Colonic mucosa (tissue), 4 donors: ENCODE measurements at regions of chr7 and their contacts with region 1.

Region 1: DNA sequence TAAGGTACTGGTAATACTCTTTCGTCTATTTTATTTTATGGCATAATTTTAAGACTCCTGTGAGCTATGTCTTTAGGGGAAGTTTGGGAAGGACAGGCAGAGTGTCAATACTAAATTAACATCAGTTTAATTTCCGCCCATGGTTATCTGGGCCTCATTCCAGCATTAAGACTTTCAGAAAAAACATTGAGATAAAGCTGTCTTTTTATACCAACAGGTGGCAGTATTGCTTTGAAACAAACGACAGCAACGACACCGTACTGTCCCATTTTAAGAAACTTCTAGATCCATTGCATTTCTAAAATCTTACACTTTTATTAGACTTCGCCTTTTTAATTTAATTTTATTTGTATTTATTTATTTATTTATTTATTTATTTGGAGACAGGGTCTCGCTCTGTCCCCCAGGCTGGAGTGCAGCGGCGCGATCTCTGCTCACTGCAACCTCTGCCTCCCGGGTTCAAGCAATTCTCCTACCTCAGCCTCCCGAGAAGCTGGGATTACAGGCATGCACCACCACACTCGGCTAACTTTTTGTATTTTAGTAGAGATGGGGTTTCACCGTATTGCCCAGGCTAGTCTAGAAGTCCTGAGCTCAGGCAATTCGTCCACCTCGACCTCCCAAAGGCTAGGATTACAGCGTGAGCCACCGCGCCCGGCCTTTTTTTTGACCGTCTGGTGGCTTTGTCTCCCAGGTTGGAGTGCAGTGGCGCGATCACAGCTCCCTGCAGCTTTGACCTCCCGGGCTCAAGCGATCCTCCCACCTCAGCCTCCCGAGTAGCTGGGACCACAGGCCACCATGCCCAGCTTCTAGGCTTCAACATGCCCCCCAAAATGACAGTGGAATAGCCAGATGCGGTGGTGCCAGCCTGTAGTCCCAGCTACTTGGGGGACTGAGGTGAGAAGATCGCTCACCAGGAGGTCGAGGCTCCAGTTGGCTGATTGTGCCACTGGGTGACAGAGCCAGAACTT is 78.7 kb upstream of the C1GALT1 start:
- DNase-seq: no peak
- H3K4me3 ChIP-seq: no peak overlapping the region
- H3K27ac ChIP-seq: no peak overlapping the region
- H3K4me1 ChIP-seq: no peaks in the 10 kb centered on the region
- H3K27me3 ChIP-seq: no peaks in the 10 kb centered on the region
- CTCF ChIP-seq: peak; percentile 62

Region 2: DNA sequence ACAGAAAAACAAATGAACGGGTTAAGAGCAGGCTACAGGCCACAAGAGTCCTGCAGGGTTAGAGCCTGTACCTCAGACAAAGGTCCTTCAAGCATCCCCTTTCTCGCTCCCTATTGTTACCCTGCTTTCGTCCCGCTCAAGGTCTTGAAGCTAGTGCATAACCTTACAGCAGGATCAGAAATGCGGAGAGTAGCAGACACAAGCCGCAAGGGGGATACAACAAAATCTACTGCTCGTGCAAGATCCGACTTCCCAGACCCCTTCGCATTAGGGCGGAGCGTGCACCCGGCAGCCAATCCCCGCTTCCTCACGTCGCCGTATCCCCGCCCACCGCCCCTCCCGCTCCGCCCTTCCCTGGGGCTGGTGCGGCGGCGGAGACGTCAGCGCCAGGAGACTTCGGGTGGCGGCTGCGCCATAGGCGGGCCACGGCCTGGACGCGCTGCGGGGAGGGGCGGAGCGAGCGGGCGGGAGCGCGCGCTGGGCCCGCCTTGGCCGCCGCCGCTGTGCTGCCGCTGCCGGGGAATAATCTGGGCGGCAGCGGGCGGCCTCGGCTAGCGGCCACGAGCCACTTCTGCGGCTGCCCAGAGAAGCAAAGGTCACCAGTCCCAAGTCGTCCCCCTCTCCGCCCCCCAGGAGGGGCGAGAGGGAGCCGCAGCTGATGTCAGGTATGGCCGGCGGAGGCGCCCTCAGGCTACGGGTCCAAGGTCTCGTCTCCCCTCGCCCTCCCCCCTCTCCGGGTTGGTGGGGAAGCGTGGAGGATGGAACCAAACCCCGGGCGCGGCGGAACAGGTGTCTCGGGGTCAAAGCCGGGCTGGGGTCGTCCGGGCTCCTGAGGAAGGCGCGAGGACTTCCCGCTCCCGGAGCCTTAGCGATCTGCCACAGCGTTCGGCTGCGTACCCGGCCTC is 78.8 kb after region 1 on chr7 and contains the start of gene C1GALT1:
- intact Hi-C with region 1: loop called (anchors 10 kb)
- DNase-seq: peak; percentile 98
- H3K4me3 ChIP-seq: peak within 1 kb of the TSS; percentile 84
- H3K27ac ChIP-seq: peak within 1 kb of the TSS; percentile 98
- H3K4me1 ChIP-seq: no peaks in the 10 kb centered on the region
- H3K27me3 ChIP-seq: no peaks in the 10 kb centered on the region
- CTCF ChIP-seq: no peak
- total RNA-seq, gene C1GALT1: 33.9 to 39.4 TPM

Region 3: GRCh38 chr7:7535691-7536090 is 432.1 kb after region 1 on chr7 and contains the start of gene COL28A1:
- intact Hi-C with region 1: loop called (anchors 5 kb)
- DNase-seq: no peak
- H3K4me3 ChIP-seq: no peak within 1 kb of the TSS
- H3K27ac ChIP-seq: no peak within 1 kb of the TSS
- H3K4me1 ChIP-seq: no peaks in the 10 kb centered on the region
- H3K27me3 ChIP-seq: no peaks in the 10 kb centered on the region
- CTCF ChIP-seq: no peak
- total RNA-seq, gene COL28A1: 1.2 to 3.5 TPM